Ovary (tissue), 10 donors: ENCODE measurements at regions of chr3 and their contacts with region 1.

Region 1: DNA sequence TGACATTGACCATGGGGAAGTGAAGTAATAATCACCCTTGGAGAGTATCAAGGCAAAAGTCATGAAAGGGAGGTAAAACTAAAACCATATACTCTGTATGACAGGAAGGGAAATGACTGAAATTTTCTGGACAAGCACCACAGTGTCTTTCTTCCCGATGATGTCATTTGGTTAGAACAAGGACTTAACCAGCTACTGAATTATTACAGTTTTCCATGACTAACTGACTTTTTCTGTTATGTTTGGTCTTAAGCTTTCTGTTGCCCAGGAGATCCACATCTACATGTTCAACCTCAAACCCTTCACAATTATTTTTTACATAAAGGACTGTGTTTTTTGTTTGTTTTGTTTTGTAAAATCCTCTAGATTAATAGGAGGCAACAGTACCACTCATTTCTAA is 191.9 kb upstream of the IL12A start:
- DNase-seq: no peak
- H3K4me3 ChIP-seq: no peak overlapping the region
- H3K27ac ChIP-seq: no peak overlapping the region
- H3K4me1 ChIP-seq: no peaks in the 10 kb centered on the region
- H3K27me3 ChIP-seq: no peaks in the 10 kb centered on the region
- CTCF ChIP-seq: no peak
- EP300 ChIP-seq: no peak
- POLR2A ChIP-seq: no peak

Region 2: GRCh38 chr3:159763602-159764489 is 32.9 kb before region 1 on chr3:
- intact Hi-C with region 1: loop called in 1 of 4 experiments (anchors 5 kb)
- DNase-seq: peak; percentile 28 to 70 (median 56)
- H3K4me3 ChIP-seq: peak overlapping the region; percentile 83
- H3K27ac ChIP-seq: peak overlapping the region; percentile 44 to 66
- H3K4me1 ChIP-seq: peaks cover 3% of the 10 kb centered on the region
- H3K27me3 ChIP-seq: no peaks in the 10 kb centered on the region
- CTCF ChIP-seq: peak in 1 of 3 donors; percentile 48
- EP300 ChIP-seq: no peak
- POLR2A ChIP-seq: peak; percentile 6